Lower lobe of right lung (tissue), 2 donors: ENCODE measurements at regions of chr2 and their contacts with region 1.

Region 1: DNA sequence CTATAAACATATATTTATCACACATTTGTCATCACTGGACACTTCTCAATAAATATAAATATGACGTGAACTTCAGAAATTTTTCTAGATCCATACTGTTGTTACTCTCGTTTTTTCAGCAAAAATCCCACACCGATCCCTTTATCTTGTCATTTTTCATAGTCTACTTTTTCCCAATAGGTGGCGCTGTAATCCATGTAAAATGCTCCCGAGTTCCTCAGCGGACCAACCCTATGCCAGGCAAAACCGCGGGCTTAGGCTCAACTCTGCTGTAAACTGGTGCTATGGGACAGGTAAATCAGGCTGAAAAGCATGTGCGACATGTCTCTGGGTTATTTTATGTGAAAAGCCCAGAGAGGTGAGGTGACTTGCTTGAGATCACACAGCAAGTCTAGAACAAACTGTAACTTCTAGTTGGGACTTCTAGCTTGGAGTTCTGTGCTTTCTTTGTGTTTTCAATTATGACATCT is 104.0 kb downstream of the COBLL1 start:
- DNase-seq: peak; percentile 60
- ATAC-seq: peak; percentile 84 to 89
- H3K4me3 ChIP-seq: no peak overlapping the region
- H3K27ac ChIP-seq: no peak overlapping the region
- H3K4me1 ChIP-seq: peaks cover 32% of the 10 kb centered on the region
- H3K27me3 ChIP-seq: no peaks in the 10 kb centered on the region
- CTCF ChIP-seq: peak; percentile 71

Region 2: DNA sequence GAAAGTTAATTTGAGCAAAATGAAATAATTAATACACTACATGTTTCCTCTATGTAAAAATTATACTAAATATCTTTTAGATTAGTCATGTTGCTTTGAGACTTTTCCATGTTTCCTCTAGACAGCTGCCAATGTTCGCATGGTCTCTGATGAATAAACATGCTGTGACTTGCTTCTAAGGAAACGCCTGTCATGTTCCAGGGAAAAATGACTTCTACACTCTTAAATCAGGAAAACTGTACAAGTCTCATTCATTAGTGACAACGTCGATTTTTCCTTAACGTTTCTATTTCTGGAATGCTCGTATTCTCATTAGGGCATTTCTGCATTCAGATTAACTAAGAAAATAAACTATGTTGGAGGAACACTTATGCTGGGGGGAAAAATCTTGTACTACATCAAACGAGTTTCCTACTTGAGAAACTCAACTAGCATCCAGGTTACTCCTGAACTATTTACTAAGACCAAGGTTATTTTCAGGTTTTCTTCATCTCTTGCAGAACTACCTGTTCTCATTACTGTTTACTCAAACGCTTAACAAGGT is 102.3 kb after region 1 on chr2:
- intact Hi-C with region 1: loop called (anchors 10 kb)
- DNase-seq: no peak
- ATAC-seq: peak in 1 of 2 donors; percentile 11
- H3K4me3 ChIP-seq: peak overlapping the region; percentile 79
- H3K27ac ChIP-seq: peak overlapping the region; percentile 95
- H3K4me1 ChIP-seq: peaks cover 31% of the 10 kb centered on the region
- H3K27me3 ChIP-seq: no peaks in the 10 kb centered on the region
- CTCF ChIP-seq: no peak

Region 3: GRCh38 chr2:164910101-164910899 is 172.7 kb after region 1 on chr2:
- intact Hi-C with region 1: loop called (anchors 5 kb)
- DNase-seq: no peak
- ATAC-seq: peak; percentile 70 to 88
- H3K4me3 ChIP-seq: no peak overlapping the region
- H3K27ac ChIP-seq: peak overlapping the region; percentile 65
- H3K4me1 ChIP-seq: peaks cover 36% of the 10 kb centered on the region
- H3K27me3 ChIP-seq: no peaks in the 10 kb centered on the region
- CTCF ChIP-seq: no peak